Panc1 (cell line): ENCODE measurements at regions of chr6 and their contacts with region 1.

Region 1: DNA sequence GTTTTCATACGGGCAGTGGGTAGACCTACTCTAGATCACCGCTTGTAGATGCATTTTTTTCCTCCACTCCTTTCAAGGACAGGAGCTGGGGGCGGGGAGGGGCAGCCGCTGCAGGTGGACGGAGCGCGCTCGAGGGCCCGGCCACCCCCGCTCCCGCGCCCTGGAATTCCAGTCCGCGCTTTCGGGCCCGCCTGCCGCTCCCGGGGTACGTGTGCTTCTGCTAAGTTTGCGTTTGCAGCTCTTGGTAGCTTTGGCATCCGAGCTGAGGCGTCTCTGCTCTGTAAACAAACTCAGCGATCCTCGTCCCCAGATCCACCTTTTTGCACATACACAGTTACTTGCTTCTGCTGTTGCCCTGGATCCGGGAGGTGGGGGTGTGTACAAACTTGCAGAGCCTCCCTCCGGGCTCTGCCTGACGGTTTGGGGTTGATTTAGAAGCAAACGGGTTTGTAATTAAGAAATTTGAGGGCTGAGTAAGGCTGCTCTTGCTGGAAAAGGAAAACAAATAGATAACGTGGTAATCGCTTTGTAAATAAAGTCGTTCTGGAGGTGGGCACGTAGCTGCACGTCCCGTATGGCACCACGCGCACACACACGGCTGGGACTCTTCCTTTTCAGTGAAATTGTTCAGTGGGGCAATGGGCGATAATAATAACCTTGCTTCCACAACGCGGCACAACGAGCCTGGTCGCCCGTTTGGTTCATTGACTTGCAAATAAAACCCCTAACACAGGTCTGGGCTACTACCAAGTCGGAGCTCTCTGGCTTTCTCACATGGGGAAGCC is 976 bp upstream of the CITED2 start:
- DNase-seq: peak; percentile 83
- ATAC-seq: peak; percentile 69
- H3K4me3 ChIP-seq: peak overlapping the region; percentile 88 to 97
- H3K27ac ChIP-seq: peak overlapping the region; percentile 99
- H3K4me1 ChIP-seq: peaks cover 28% of the 10 kb centered on the region
- H3K27me3 ChIP-seq: no peaks in the 10 kb centered on the region
- CTCF ChIP-seq: no peak; the same call in 1 of the 2 replicates

Region 2: GRCh38 chr6:139539852-139540251 is 164.4 kb after region 1 on chr6:
- CTCF ChIA-PET with region 1: no interaction called
- POLR2A ChIA-PET with region 1: interaction called, 3 read pairs
- in situ Hi-C with region 1: no loop called
- intact Hi-C with region 1: loop called (anchors 10 kb)
- DNase-seq: peak; percentile 85
- ATAC-seq: peak; percentile 94
- H3K4me3 ChIP-seq: peak overlapping the region in 1 of 2 experiments; percentile 34; a peak in 2 of 4 replicates
- H3K27ac ChIP-seq: peak overlapping the region; percentile 93
- H3K4me1 ChIP-seq: peaks cover 39% of the 10 kb centered on the region
- H3K27me3 ChIP-seq: no peaks in the 10 kb centered on the region
- CTCF ChIP-seq: no peak

Region 3: DNA sequence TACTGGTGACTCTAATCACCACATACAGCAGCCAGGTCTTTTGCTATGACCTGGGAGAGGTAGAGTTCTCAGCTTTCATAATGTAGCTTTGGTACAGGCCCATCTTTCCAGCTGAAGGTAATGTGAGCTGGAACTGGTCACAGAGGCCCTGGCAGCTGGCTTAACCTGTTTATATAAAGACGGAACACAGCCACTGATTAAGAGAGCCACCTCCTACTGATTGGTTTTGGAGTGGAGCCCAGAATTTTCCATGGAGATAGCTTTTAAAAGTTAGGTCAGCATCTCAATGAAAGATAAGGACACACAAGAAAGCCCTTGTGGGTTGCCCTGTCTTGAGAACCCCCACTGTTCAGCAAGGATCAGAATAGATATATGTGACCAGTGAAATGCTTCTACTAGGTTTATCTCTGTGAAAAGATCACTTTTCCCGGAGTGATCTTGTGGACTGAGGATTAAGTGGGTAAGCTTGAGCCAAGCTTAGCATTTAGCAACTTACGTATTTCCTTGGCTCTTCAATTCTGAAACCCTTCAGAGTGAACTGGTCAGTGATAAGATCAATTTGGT is 212.7 kb after region 1 on chr6:
- CTCF ChIA-PET with region 1: no interaction called
- POLR2A ChIA-PET with region 1: interaction called, 12 read pairs
- in situ Hi-C with region 1: no loop called
- intact Hi-C with region 1: no loop called
- DNase-seq: no peak
- ATAC-seq: peak; percentile 86
- H3K4me3 ChIP-seq: no peak overlapping the region
- H3K27ac ChIP-seq: peak overlapping the region; percentile 93
- H3K4me1 ChIP-seq: peaks cover 33% of the 10 kb centered on the region
- H3K27me3 ChIP-seq: no peaks in the 10 kb centered on the region
- CTCF ChIP-seq: no peak

Region 4: DNA sequence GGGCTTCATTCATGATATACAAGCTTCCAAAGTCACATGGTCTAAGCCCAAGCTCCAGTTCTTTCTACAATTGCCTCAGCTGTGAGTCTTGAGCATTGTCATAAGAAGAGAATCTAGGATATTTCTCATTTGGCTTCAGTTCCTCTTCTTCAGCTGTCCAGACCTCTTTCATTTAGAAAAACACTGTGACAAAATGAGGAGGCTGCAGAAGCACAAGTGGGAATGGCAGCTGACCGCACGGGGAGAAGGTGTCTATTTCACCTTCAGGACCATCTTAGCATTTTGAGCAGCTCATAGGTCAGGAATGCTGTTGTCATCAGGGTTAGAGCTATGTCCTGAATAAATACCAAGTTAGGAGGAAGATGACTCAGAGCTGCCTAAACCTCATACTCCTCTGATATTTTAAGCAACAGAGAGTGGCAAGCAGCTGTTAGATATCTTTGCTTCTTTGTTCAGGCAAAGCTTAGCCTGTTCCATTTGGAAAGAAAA is 389.1 kb after region 1 on chr6:
- CTCF ChIA-PET with region 1: no interaction called
- POLR2A ChIA-PET with region 1: interaction called, 23 read pairs
- in situ Hi-C with region 1: no loop called
- intact Hi-C with region 1: loop called (anchors 2 kb)
- DNase-seq: peak; percentile 96
- ATAC-seq: peak; percentile 93
- H3K4me3 ChIP-seq: no peak overlapping the region
- H3K27ac ChIP-seq: peak overlapping the region; percentile 86
- H3K4me1 ChIP-seq: peaks cover 43% of the 10 kb centered on the region
- H3K27me3 ChIP-seq: no peaks in the 10 kb centered on the region
- CTCF ChIP-seq: no peak

Region 5: DNA sequence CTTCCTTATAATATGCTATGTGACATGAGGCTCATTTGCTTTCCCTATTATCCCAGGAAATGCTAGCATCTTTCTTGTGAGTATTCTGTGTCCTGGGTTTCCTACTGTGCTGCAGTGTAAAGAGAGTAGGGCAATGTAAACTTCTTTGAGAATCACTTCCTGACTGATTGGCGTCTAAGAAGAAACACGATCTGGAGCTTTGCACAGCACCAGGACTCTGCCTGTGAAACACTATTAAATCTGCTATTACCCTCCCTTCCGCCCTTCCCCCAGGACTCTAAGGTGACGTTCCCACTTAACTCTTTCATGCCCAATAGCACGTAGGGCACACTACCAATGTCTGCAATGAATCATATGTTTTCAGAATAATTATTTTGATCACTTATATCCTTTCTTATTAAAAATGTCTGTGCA is 606.4 kb after region 1 on chr6:
- CTCF ChIA-PET with region 1: no interaction called
- POLR2A ChIA-PET with region 1: interaction called, 5 read pairs
- in situ Hi-C with region 1: no loop called
- intact Hi-C with region 1: loop called (anchors 10 kb)
- DNase-seq: peak; percentile 59
- ATAC-seq: peak; percentile 83
- H3K4me3 ChIP-seq: peak overlapping the region in 1 of 2 experiments; percentile 9; a peak in 1 of 4 replicates
- H3K27ac ChIP-seq: peak overlapping the region; percentile 85
- H3K4me1 ChIP-seq: peaks cover 42% of the 10 kb centered on the region
- H3K27me3 ChIP-seq: no peaks in the 10 kb centered on the region
- CTCF ChIP-seq: no peak

Region 6: DNA sequence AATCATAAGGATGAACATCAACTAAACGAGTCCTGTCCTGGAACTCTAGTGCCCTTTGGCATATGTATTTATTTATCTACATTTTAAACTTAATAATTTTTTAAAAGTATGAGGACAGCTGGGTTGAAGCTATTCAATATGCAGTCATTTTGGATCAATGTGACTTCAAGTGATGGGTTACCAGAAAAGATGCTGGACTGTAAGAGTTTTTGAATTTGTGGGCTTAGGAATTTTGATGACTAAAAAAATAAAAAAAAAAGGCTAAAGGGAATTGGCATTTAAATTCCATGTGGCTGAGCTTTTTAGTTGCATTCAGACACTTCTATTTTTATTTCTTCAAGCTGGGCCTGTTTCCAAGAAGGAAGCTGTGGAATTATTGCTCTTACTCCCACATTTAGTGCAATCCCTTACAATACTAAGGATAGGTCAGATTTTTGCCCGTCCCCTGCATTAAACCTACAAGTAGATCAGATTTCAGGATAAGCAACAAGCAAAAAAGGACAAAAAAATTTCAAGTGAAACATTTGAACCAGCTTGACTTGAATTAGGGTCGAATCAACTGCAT is 703.2 kb after region 1 on chr6:
- CTCF ChIA-PET with region 1: no interaction called
- POLR2A ChIA-PET with region 1: no interaction called
- in situ Hi-C with region 1: no loop called
- intact Hi-C with region 1: no loop called
- DNase-seq: no peak
- ATAC-seq: no peak
- H3K4me3 ChIP-seq: no peak overlapping the region
- H3K27ac ChIP-seq: no peak overlapping the region
- H3K4me1 ChIP-seq: no peaks in the 10 kb centered on the region; the same call in 1 of the 2 replicates
- H3K27me3 ChIP-seq: no peaks in the 10 kb centered on the region
- CTCF ChIP-seq: no peak